ENCODE measurements at regions of chr3 and their contacts with region 1.

Region 1: DNA sequence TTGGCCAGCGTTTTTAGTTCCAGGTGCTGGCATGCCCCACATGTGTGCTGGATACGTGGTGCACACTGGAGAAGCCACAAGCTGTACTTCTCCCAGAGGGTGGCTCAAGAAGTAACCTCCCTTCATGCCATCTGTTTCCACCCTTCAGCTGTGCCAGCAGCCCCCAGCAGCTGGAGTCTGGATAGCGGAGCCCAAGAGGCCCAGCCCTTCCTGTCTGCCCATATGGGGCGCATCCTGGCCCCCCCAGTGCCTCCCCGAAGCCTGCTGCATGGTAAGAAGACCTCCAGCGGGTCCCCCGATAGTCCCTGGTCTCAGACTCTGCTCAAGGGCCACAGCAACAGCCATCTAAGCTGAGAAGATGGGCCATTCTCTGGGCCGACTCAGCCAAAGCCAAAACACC is 5.8 kb upstream of the MANF start:
- DNase-seq: no peak
- H3K4me3 Mint-ChIP-seq: no peak overlapping the region
- H3K27ac Mint-ChIP-seq: no peak overlapping the region
- H3K4me1 Mint-ChIP-seq: peaks cover 22% of the 10 kb centered on the region
- H3K27me3 Mint-ChIP-seq: no peaks in the 10 kb centered on the region

Region 2: GRCh38 chr3:51391075-51391567 is 11.8 kb after region 1 on chr3 and contains the start of gene RBM15B:
- CTCF ChIA-PET with region 1: interaction called, 14 read pairs
- POLR2A ChIA-PET with region 1: interaction called, 3 read pairs
- DNase-seq: peak; percentile 97
- H3K4me3 Mint-ChIP-seq: peak within 1 kb of the TSS; percentile 83
- H3K27ac Mint-ChIP-seq: peak within 1 kb of the TSS; percentile 93
- H3K4me1 Mint-ChIP-seq: peaks cover 78% of the 10 kb centered on the region
- H3K27me3 Mint-ChIP-seq: no peaks in the 10 kb centered on the region
- total RNA-seq, gene RBM15B: 29.0 to 29.8 TPM

Region 3: DNA sequence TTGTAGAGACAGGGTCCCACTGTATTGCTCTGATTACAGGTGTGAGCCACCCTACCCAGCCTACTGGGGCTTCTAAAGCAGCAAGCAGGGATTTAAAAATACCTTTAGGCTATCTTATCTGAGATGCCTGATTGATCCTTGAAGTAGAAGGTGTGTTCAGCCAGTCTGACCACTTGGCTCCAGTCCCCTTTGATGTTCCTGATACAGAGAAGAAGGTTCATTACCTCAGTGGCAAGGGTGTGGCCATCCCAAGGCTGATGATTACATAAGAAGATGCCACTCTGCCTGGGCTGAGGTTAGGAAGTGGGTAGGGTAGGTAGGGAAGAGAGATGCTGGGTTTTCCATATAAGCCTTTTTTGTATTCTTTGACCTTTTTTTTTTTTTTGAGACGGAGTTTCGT is 131.7 kb after region 1 on chr3:
- CTCF ChIA-PET with region 1: no interaction called
- POLR2A ChIA-PET with region 1: no interaction called
- DNase-seq: no peak
- H3K4me3 Mint-ChIP-seq: no peak overlapping the region
- H3K27ac Mint-ChIP-seq: no peak overlapping the region
- H3K4me1 Mint-ChIP-seq: peaks cover 26% of the 10 kb centered on the region
- H3K27me3 Mint-ChIP-seq: no peaks in the 10 kb centered on the region

Measured in activated CD4-positive, alpha-beta T cell treated with anti-CD3 and anti-CD28 coated beads, Interleukin-2, amount 10 ng/mL, durations not matched to agents 7 days and 5 days (primary cell).